ENCODE measurements at regions of chr2 and their contacts with region 1.

Region 1: DNA sequence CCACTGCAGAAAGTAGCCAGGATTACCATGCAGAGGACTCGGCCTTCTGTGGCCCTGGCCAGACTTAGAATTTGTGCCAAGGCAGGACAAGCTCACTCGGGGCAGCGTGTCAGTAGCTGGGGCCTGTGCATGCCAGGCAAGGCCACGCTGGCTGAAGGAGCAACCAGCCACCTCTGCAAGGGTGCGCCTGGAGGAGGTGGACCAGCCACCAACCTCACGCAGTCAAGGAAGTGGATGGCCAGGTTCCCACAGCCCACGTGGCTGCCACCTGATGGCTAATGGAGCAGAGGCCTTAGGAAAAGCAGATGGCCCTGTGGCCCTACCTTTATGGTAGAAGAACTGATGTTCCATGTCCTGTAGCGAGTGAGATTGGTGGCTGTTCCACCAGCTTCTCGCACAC is 107.9 kb downstream of the CCDC74A start:
- DNase-seq: no peak
- ATAC-seq: no peak
- H3K4me3 ChIP-seq: no peak overlapping the region
- H3K4me3 Mint-ChIP-seq: no peak overlapping the region
- H3K27ac ChIP-seq: no peak overlapping the region
- H3K27ac Mint-ChIP-seq: no peak overlapping the region
- H3K4me1 ChIP-seq: no peaks in the 10 kb centered on the region
- H3K4me1 Mint-ChIP-seq: no peaks in the 10 kb centered on the region
- H3K27me3 ChIP-seq: no peaks in the 10 kb centered on the region
- H3K27me3 Mint-ChIP-seq: no peaks in the 10 kb centered on the region
- CTCF ChIP-seq: no peak

Region 2: DNA sequence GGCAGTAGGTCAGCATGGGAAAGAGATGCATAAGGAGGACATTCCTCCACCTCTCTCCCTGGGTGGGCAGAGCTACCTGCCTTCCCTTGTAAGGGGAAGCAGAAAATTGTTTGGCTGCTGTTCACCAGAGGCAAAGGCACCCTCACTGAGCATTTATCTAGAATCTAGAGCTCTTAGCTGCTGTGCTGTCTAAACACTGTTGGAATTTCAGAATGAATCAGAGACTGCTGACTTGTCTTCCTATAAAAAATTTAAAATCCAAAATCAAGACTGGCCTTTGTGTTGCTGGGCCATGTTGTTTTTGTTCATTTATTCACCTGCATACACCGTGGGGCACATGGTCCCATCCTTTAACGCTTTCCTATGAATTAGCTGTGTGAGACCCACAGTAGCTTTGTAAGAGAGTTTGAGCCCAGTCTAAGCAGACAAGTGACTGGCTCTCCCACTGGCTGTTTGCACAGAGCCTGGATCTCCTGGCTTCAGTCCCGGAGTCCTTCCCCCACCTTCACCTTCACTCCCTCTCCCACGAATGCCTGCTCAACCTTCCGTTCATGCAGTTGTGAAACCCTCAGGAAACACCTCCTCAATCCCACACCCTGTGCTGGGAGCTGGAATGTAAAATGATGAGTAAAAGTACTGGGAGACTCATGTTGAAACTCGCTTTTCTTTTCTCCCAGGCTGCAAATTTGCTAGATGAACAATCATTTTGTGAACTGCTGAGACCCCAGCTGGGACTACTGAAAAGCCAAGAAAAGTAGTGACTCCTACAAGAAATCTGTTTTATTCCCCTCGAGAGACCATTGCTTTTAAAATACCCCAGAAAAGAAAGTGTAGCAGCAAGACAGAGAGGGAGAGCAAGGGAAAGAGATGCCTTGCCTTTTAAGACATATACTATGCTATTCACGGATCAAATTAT is 618.5 kb before region 1 on chr2:
- CTCF ChIA-PET with region 1: no interaction called
- POLR2A ChIA-PET with region 1: no interaction called
- intact Hi-C with region 1: loop called in 1 of 2 experiments (anchors 2 kb)
- DNase-seq: peak in 1 of 9 experiments; percentile 7
- ATAC-seq: no peak
- H3K4me3 ChIP-seq: no peak overlapping the region
- H3K4me3 Mint-ChIP-seq: no peak overlapping the region
- H3K27ac ChIP-seq: no peak overlapping the region
- H3K27ac Mint-ChIP-seq: no peak overlapping the region
- H3K4me1 ChIP-seq: peaks cover 3% of the 10 kb centered on the region
- H3K4me1 Mint-ChIP-seq: peaks cover 2% of the 10 kb centered on the region
- H3K27me3 ChIP-seq: no peaks in the 10 kb centered on the region
- H3K27me3 Mint-ChIP-seq: peaks cover 8% of the 10 kb centered on the region
- CTCF ChIP-seq: no peak

Region 3: DNA sequence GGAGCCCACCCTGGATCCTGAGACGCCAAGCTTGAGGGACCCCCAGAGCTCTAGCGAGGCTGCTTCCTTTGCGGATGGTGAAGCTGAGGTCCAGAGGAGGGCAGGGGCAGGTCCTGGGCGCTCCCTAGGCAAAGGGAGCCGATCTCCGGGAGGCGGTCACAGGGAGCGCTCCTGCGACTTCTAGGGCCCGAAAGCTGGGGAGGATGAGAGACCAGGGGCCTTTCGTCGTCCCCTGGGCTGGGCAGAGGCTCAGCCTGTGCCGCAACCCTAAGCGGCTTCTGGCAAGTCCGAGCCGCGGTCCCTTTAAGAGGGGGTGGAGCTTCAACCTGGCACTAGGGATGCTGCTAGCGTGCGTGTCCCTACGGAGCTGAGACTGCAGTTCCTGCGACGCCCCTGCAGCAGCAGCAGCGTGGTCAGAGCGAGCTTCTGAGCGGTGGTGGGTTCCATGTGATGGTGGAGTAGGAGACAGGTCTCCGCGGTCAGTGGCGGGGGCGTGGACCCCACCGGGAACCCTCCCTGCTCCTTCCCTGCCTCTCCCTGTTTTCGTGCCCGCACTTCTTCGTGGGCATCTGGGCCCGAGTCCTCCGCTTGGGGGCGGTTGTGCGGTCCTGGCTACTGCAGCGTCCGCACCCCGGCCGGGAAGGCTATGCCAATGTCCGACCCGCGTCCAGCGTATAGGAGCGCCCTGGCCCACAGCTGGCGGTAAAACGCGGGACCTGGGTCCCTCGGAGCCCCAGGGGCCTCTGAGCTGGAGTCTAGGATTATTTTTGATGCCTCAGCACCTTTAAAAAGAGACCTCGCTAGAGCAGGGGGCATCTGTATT is 46.7 kb after region 1 on chr2:
- CTCF ChIA-PET with region 1: no interaction called
- POLR2A ChIA-PET with region 1: no interaction called
- intact Hi-C with region 1: no loop called
- DNase-seq: peak; percentile 30 to 84 (median 68)
- ATAC-seq: peak; percentile 97
- H3K4me3 ChIP-seq: peak overlapping the region; percentile 74 to 85
- H3K4me3 Mint-ChIP-seq: peak overlapping the region; percentile 87
- H3K27ac ChIP-seq: peak overlapping the region; percentile 37 to 67
- H3K27ac Mint-ChIP-seq: peak overlapping the region; percentile 67
- H3K4me1 ChIP-seq: peaks cover 7% of the 10 kb centered on the region
- H3K4me1 Mint-ChIP-seq: peaks cover 36% of the 10 kb centered on the region
- H3K27me3 ChIP-seq: no peaks in the 10 kb centered on the region
- H3K27me3 Mint-ChIP-seq: peaks cover 4% of the 10 kb centered on the region
- CTCF ChIP-seq: no peak